Mammary epithelial cell (primary cell): ENCODE measurements at regions of chr2 and their contacts with region 1.

Region 1: GRCh38 chr2:69946351-69947077 is 14.9 kb downstream of the ASPRV1 start:
- DNase-seq: peak; percentile 89
- H3K4me3 ChIP-seq: no peak overlapping the region
- H3K27ac ChIP-seq: peak overlapping the region; percentile 97
- H3K4me1 ChIP-seq: peaks cover 35% of the 10 kb centered on the region
- H3K27me3 ChIP-seq: no peaks in the 10 kb centered on the region
- CTCF ChIP-seq: no peak

Region 2: DNA sequence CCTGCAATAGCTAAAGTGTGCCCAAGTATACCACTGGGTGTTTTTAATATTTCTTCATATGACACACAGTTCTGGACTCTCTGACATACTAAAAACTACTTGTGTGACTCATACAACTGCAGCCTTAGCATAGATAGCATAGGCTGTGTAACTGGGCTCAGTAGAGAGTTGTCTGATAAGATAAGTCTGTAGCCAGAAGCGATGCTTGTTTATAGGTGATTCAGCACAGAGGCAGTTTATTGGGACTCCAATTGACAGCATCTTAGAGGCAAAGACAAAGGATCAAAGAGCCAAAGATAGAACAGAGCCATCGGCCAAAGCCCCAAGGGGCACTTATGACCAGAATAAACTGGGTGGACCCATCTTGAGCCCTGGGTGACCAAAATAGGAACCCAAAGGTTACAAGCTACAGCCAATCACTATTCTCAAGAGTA is 345.3 kb before region 1 on chr2:
- CTCF ChIA-PET with region 1: no interaction called
- dilution Hi-C with region 1: no loop called
- in situ Hi-C with region 1: no loop called
- intact Hi-C with region 1: no loop called
- DNase-seq: peak; percentile 73
- H3K4me3 ChIP-seq: no peak overlapping the region
- H3K27ac ChIP-seq: no peak overlapping the region
- H3K4me1 ChIP-seq: peaks cover 2% of the 10 kb centered on the region
- H3K27me3 ChIP-seq: no peaks in the 10 kb centered on the region
- CTCF ChIP-seq: no peak

Region 3: GRCh38 chr2:69893684-69894551 is 52.6 kb before region 1 on chr2 and contains the start of gene SNRNP27:
- CTCF ChIA-PET with region 1: interaction called, 10 read pairs
- dilution Hi-C with region 1: no loop called
- in situ Hi-C with region 1: no loop called
- intact Hi-C with region 1: no loop called
- DNase-seq: peak; percentile 71
- H3K4me3 ChIP-seq: peak within 1 kb of the TSS; percentile 59 to 96 (median 96)
- H3K27ac ChIP-seq: peak within 1 kb of the TSS; percentile 94
- H3K4me1 ChIP-seq: peaks cover 10% of the 10 kb centered on the region
- H3K27me3 ChIP-seq: no peaks in the 10 kb centered on the region
- CTCF ChIP-seq: no peak
- total RNA-seq, gene SNRNP27: 25.3 to 51.2 TPM

Region 4: GRCh38 chr2:69989422-69990126 is 43.1 kb after region 1 on chr2:
- CTCF ChIA-PET with region 1: no interaction called
- dilution Hi-C with region 1: loop called (anchors 5 kb)
- in situ Hi-C with region 1: no loop called
- intact Hi-C with region 1: no loop called
- DNase-seq: no peak
- H3K4me3 ChIP-seq: no peak overlapping the region
- H3K27ac ChIP-seq: no peak overlapping the region
- H3K4me1 ChIP-seq: no peaks in the 10 kb centered on the region
- H3K27me3 ChIP-seq: no peaks in the 10 kb centered on the region
- CTCF ChIP-seq: no peak

Region 5: GRCh38 chr2:69997015-69997830 is 50.7 kb after region 1 on chr2:
- CTCF ChIA-PET with region 1: no interaction called
- dilution Hi-C with region 1: loop called (anchors 5 kb)
- in situ Hi-C with region 1: no loop called
- intact Hi-C with region 1: loop called (anchors 1 kb)
- DNase-seq: peak; percentile 81
- H3K4me3 ChIP-seq: no peak overlapping the region
- H3K27ac ChIP-seq: peak overlapping the region; percentile 44
- H3K4me1 ChIP-seq: peaks cover 23% of the 10 kb centered on the region
- H3K27me3 ChIP-seq: no peaks in the 10 kb centered on the region
- CTCF ChIP-seq: peak in 1 of 2 donors; percentile 32

Region 6: DNA sequence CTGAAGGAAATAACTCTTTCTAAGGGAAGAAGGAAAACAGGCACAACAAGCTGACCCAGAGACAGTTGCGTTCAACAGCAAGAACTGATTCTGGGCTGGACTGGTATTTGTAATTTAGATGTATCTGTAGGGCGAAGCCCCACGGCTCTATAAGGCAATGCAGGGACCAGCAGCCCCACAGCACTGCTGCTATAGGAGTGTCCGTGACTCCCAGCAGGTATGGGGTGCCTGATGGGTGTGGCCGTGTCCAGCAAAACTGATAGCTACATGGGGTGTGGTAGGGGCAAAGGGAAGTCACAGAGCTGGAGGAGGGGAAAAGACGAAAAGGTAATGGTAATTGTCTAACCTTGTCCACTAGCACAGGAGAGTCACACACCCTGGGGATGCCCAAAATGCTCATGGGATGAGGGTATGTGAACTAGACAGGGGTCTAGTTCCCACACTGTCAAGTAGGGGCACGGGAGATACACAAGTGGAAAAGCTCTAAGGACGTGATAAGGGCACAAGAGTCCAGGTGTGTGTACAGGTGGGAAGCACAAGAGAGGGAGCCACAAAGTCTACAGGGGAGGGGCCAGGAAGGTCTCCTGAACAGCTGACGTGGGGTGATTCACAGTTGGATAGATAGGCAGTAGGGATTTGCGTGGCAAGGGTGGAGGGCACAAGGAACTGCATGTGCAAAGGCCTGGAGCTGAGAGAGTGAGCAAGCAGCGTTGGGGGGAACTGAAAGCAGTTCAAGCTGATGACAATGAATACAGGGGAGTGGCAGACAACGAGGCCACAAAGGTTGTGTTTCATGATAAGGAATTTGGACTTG is 63.5 kb after region 1 on chr2:
- CTCF ChIA-PET with region 1: no interaction called
- dilution Hi-C with region 1: no loop called
- in situ Hi-C with region 1: no loop called
- intact Hi-C with region 1: no loop called
- DNase-seq: no peak
- H3K4me3 ChIP-seq: no peak overlapping the region
- H3K27ac ChIP-seq: no peak overlapping the region
- H3K4me1 ChIP-seq: no peaks in the 10 kb centered on the region
- H3K27me3 ChIP-seq: no peaks in the 10 kb centered on the region
- CTCF ChIP-seq: no peak

Region 7: DNA sequence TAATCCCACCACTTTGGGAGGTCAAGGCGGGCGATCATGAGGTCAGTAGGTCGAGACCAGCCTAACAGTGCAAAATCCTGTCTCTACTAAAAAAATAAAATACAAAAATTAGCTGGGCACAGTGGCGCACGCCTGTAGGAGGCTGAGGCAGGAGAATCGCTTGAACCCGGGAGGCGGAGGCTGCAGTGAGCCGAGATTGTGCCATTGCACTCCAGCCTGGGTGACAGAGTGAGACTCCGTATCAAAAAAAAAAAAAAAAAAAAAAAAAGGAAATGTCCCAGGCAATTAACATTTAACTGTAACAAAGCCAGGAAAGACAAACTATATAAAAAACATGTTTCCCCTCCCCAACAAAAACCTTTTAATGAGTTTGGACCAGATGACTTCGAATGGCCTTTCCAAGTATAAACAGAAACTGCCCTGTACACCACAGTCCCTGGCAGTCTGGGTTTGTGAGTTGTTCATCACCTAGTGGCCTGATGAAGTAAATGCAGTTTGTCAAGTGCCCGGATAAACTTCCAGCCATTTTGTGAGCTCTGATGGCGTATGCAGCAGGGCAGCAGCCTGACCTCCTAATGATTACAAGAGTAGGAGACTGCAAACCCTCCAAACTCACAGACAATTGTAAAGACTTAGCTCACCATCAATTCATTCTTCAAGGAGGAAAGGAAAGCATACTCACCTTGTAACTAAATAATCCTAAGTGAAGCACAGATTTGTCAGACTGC is 124.2 kb after region 1 on chr2:
- CTCF ChIA-PET with region 1: interaction called, 3 read pairs
- dilution Hi-C with region 1: no loop called
- in situ Hi-C with region 1: no loop called
- intact Hi-C with region 1: loop called (anchors 1 kb)
- DNase-seq: peak; percentile 82
- H3K4me3 ChIP-seq: no peak overlapping the region
- H3K27ac ChIP-seq: peak overlapping the region; percentile 58
- H3K4me1 ChIP-seq: peaks cover 13% of the 10 kb centered on the region
- H3K27me3 ChIP-seq: no peaks in the 10 kb centered on the region
- CTCF ChIP-seq: peak; percentile 94

Region 8: GRCh38 chr2:70094978-70095719 is 148.6 kb after region 1 on chr2:
- CTCF ChIA-PET with region 1: no interaction called
- dilution Hi-C with region 1: no loop called
- in situ Hi-C with region 1: no loop called
- intact Hi-C with region 1: no loop called
- DNase-seq: peak; percentile 71
- H3K4me3 ChIP-seq: no peak overlapping the region
- H3K27ac ChIP-seq: peak overlapping the region; percentile 49
- H3K4me1 ChIP-seq: peaks cover 13% of the 10 kb centered on the region
- H3K27me3 ChIP-seq: no peaks in the 10 kb centered on the region
- CTCF ChIP-seq: no peak